Head of caudate nucleus (tissue), 42 donors: ENCODE measurements at regions of chr17 and their contacts with region 1.

Region 1: DNA sequence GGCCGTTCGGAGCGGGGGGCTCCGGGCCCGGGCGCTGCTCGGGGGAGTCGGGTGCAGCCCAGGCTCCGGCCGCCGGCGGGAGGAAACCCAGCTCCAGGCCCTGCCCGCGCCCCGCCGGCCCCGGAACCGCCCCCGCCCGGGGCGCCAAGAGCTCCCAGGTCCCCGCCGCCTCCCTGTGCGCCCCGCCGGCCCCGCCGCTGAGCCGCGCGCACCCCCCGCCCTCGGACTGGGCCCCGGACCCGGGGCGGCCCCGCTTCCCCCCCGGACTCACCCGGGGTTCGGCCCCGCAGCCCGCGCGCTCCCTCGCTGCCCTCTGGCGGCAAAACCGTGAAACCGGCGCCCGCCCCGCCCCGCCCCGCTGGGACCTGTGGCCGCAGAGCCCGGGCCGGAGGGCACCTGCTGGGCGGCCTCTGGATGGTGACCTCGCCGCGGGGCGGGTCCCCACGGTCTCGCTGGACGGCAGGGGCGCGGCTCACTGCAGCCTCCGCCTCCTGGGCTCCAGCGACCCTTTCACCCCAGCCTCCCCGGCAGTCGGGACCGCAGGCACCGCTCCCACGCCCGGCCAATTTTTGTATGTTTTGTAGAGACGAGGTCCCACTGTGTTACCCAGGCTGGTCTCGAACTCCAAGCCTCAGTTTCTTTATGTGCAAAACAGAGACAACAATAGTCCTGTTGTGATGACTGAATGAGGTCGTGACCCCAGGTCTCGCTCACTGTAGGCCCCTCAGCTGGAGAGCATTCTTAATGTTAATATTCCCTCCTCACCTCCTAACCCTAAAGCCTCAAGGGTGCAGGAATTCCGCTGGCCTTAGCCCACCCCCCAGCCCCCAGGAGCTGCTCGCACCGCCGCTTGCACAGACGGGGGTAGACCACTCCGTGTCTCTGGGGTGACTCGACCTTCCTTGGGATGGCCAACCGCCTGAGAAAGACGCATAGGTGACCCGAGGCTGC is 33.6 kb upstream of the RPH3AL start:
- DNase-seq: peak; percentile 43 to 88 (median 73)

Region 2: DNA sequence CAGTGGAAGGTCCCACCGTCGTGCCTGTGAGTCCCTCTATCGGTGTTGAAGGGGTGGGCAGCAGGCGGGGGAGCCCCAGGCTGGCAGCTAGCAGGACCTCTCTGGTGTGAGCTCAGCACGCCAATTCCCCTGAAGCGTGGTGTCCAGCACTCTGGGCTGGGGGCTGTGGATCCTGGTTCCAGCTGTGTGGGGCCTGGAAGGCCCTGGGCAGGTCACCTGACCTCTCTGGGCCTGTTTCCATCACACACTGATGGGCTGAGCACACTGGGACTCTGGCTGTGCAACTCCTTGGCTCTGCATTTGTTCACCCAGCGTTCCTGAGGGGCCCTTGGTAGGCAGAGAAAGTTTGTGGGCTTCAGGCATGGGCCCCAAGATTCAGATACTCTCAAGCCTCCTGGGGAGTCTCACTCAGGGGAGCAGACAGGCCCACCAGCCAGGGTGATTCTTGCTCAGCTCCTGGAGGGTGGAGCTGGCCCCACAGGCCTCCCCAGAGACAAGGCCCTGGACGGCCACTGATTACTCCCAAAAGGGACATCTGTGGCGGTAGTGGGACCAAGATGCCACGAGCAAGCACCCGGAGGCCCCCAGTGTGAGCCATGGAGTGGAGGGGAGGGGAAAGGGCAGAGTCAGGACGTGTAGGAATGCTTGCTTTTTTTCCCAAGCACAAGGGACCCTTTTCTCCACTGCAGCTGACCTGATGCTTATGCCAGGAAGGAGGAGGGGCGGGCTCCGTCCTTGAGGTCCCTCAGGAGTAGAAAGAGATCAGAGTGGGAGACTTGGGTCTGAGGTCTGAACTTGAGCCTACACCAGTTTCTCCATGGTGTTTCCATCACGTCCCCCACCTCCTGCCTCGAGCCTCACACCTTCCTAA is 240.3 kb before region 1 on chr17:
- intact Hi-C with region 1: loop called (anchors 5 kb)
- DNase-seq: peak in 23 of 42 donors; percentile 2 to 46 (median 17)

Region 3: GRCh38 chr17:164303-165235 is 221.6 kb before region 1 on chr17:
- intact Hi-C with region 1: loop called (anchors 5 kb)
- DNase-seq: peak; percentile 49 to 88 (median 74)

Region 4: DNA sequence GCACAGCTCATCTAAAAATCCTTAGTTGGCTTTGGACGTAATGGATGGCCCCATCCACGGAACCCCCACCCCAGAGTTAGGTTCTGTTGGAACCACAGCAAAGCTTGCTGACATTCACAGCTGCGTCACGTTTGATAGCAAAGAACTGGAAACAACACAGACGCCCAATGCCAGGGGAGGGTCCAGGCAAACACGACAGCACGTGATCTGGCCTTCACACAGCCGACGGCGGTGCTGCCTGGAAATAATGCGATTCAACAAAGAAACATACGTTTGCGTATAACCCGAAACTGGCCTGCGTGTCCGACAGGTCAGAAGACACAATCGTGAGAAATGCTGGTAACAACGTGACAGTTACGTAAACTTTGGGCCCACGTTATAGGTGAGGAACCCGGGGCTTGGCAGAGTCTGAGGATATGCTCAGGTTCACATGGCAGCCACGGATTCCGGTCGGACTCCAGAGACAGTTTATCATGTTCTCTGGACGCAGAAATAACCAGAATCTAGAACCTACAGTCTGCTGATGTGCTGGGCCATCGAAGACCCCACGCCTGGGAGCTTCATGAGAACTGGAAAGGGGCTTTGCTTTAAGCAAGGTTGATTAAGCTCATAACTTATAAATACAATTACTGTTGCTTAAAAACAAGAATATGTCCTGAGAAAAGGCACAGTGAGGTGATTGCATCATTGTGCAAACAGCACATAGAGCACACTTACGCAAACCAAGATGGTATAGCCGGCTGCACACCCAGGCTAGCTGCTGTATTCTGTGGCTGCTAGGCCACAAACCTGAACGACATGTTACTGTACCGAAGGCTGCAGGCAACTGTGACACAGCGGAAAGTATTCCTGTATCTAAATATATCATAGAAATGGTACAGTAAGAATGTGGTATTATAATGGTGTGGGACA is 103.9 kb before region 1 on chr17:
- intact Hi-C with region 1: no loop called
- DNase-seq: peak in 11 of 42 donors; percentile 0 to 34 (median 9)

Region 5: DNA sequence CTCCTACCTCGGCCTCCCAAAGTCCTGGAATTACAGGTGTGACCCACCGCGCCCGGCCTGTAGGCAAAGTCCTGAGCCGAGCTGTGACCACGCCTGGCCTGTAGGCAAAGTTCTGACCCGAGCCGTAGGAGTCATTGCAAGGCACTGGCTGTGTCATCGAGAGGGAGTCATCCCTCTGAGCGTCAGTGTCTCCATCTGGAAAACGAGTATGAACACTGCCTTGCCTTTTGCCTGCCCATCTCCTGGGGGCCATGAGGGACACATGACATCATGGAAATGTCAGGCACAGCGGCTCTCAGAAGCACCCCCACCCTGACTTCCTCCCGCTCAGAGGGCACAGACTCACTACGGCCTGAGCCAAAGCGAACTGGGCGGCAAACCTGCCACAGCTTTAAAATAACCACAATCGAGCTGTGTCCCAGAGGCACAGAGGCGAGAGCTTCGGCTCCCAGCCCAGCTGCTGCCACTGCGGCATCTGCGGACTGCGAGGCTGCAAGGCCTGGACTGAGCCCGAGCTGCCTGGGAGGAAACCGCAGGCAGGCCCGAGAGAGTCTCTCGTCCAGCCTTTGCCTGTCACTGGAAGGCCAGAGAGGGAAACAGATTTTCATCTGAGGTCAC is 84.4 kb before region 1 on chr17:
- intact Hi-C with region 1: no loop called
- DNase-seq: peak in 2 of 42 donors; percentile 2 to 14

Region 6: DNA sequence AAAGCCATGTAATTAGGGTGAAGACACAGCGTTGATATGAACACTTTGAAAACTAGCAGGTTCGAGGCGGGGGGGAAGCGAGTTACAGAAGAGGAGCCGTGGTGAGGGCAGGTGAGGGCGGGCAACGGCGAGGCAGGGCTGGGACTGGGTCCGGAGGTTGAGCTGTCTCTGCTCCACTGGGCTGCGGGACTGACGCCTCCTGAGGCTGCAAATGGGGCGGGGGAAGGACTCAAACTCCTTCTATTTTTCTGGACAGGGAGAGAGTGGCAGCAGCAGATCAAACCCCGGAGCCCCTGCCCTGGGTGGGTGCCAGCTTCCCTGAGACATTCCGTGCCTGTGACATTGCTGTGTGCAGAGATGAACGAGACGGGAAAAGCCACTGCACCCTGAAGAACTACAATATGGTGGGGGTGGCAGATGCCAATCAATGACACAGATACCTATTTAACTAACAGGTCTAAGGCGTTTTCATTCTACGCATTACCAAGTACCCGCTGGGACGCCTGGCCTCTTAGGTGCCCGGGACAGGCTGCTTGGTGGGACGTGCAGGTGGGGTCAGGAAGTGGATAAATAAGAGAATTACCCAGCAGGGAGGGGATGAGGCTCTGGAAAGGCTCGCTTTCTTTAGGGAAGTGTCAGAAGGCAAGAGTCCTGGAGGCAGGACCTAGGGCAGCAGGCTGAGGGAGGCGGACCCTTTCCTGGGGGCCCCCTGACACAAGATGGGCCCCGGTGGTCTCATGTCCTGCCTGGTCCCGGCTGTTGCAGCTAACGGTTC is 64.0 kb before region 1 on chr17:
- intact Hi-C with region 1: no loop called
- DNase-seq: peak in 5 of 42 donors; percentile 5 to 38 (median 14)

Region 7: GRCh38 chr17:441150-441549 is 54.9 kb after region 1 on chr17:
- intact Hi-C with region 1: no loop called
- DNase-seq: no peak